Activated CD4-positive, alpha-beta memory T cell treated with anti-CD3 and anti-CD28 coated beads, Interleukin-2, amount 10 ng/mL, durations not matched to agents 7 days and 5 days (primary cell): ENCODE measurements at regions of chr20 and their contacts with region 1.

Region 1: DNA sequence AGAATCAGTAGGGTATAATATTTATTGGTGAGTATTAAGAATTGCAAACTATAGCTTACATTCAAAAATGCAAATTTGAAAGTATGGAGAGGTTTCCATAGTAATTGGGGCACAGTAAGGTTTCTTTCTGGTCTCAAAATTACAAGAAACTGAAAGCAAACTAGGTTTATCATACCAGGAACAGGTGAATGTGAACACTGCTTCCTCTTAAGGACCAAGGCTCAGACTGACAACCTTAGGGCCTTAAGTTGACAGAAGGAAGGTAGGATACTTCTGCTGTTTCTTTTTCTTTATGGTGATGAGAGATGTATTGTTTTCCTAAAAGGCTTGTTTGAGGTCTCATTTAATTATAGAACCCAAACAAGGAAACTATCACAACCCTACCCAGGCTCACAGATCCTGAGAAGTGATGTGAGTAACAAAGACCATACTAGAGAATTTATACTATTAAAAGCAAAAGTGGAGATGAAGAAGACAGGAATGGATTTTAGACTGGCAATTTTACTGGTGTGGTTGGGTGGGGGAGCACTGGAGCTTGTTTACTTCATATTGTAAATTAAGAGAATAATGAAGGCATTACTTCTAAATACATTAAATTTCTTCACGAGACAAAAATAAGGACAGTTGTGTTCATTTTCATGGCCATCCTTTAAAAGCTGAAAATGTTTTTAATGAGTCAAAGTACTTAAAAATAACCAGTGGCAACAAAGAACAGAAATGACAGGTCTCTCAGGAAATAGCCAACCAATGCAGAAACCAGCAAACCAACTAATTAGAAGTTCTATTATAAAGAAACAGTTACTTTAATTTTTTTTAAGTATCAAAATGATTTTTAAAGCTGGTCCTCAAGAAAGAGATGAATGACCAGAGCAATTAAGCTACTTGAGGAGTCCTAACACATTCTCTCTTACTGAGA is 21.3 kb downstream of the STAU1 start:
- DNase-seq: no peak
- H3K4me3 Mint-ChIP-seq: peak overlapping the region; percentile 46
- H3K27ac Mint-ChIP-seq: peak overlapping the region; percentile 64
- H3K4me1 Mint-ChIP-seq: peaks cover 51% of the 10 kb centered on the region
- H3K27me3 Mint-ChIP-seq: no peaks in the 10 kb centered on the region

Region 2: DNA sequence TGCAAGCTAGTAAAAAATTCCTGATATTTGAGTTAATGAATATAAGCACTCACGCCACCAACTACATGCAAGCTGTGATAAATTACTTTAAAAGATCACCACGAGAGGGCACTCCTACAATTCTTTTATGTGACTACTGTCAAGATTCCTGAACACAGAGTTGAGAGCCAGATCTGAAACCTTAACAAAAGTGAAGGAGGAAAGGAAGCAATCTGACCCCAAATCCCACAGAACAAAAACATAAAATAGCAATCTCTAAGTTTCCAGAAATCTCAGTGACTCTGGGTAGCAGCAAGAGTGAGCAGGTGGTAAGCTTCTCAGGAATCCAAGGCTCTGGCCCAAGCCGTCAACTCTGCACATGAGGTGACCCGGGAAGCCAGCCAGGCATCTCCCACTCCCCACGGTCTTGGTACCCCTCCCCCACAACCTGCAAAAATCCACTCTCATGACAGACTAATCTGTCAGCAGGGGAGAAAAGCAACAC is 33.8 kb before region 1 on chr20:
- CTCF ChIA-PET with region 1: interaction called, 16 read pairs
- POLR2A ChIA-PET with region 1: no interaction called
- DNase-seq: no peak
- H3K4me3 Mint-ChIP-seq: no peak overlapping the region
- H3K27ac Mint-ChIP-seq: no peak overlapping the region
- H3K4me1 Mint-ChIP-seq: peaks cover 7% of the 10 kb centered on the region
- H3K27me3 Mint-ChIP-seq: no peaks in the 10 kb centered on the region

Region 3: DNA sequence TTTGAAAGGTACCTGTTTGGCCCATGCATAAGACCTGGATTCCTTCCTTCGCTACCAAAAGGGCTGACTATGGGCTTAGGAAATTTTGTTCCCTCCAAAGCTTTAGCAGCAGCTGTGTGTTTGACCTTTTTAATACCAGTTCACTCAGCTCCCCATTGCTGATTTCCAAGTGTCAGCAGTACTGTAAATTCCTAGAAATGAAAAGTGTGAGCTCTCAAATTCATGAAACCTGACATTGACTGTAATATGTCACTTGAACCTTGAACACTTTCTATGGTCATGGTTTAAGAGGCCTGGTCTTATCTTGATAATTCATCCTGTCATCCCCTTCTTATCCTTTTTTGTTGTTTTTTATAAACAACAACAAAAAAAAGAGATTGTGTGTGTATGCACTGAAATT is 10.3 kb before region 1 on chr20:
- CTCF ChIA-PET with region 1: no interaction called
- POLR2A ChIA-PET with region 1: interaction called, 19 read pairs
- DNase-seq: no peak
- H3K4me3 Mint-ChIP-seq: no peak overlapping the region
- H3K27ac Mint-ChIP-seq: no peak overlapping the region
- H3K4me1 Mint-ChIP-seq: peaks cover 43% of the 10 kb centered on the region
- H3K27me3 Mint-ChIP-seq: no peaks in the 10 kb centered on the region

Region 4: DNA sequence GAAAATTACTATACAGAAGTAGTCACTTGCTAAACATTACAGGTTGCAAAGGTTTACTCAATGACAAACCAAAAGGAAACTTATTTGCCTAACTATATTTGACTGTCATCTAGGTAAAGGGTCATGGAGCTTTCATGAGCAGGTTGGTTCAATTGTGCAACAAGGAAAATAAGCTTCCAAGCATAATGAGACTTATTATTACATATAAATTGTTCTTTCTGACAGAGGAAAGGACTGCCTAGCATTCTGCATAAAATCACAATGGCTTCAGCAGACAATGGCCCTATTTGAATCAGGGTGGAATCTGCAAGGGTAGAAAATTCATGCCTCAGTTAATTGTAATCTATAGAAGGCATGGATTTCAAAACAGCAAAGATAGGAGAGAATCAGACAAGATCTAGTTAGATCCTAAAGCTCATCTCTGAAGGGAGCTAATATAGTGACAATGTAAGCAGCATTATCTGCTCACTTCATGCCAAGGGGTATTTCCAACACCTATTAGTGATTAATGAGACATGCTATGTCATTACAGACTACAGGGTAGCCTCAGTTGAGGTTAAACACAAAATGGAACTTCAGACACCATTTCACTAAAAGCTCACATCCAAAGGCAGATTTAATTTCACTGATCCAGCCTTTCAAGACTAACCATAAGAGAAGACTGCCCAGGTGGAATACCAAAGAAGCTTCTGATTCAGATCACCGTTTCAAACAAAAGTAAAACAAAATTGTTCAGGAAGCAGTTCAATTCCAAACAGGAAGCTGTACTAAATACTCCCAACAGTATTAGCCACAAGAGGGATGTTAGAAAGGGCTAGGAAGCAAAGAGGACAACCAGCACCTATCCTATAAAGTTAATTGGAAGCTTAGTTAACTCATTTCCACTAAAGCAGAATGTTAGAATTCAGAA is 12.8 kb after region 1 on chr20:
- CTCF ChIA-PET with region 1: interaction called, 5 read pairs
- POLR2A ChIA-PET with region 1: interaction called, 19 read pairs
- DNase-seq: no peak
- H3K4me3 Mint-ChIP-seq: no peak overlapping the region
- H3K27ac Mint-ChIP-seq: no peak overlapping the region
- H3K4me1 Mint-ChIP-seq: peaks cover 43% of the 10 kb centered on the region
- H3K27me3 Mint-ChIP-seq: no peaks in the 10 kb centered on the region

Region 5: GRCh38 chr20:49186535-49187329 is 19.9 kb after region 1 on chr20:
- CTCF ChIA-PET with region 1: interaction called, 5 read pairs
- POLR2A ChIA-PET with region 1: interaction called, 29 read pairs
- DNase-seq: peak; percentile 73
- H3K4me3 Mint-ChIP-seq: peak overlapping the region; percentile 90
- H3K27ac Mint-ChIP-seq: peak overlapping the region; percentile 81
- H3K4me1 Mint-ChIP-seq: peaks cover 48% of the 10 kb centered on the region
- H3K27me3 Mint-ChIP-seq: peaks cover 7% of the 10 kb centered on the region